Mammary epithelial cell (primary cell): ENCODE measurements at regions of chr11 and their contacts with region 1.

Region 1: GRCh38 chr11:9460322-9461067 is at the start of gene ZNF143:
- DNase-seq: peak; percentile 100
- H3K4me3 ChIP-seq: peak within 1 kb of the TSS; percentile 65 to 88 (median 82)
- H3K27ac ChIP-seq: peak within 1 kb of the TSS; percentile 98
- H3K4me1 ChIP-seq: peaks cover 19% of the 10 kb centered on the region
- H3K27me3 ChIP-seq: no peaks in the 10 kb centered on the region
- CTCF ChIP-seq: no peak
- total RNA-seq, gene ZNF143: 19.5 to 22.7 TPM

Region 2: DNA sequence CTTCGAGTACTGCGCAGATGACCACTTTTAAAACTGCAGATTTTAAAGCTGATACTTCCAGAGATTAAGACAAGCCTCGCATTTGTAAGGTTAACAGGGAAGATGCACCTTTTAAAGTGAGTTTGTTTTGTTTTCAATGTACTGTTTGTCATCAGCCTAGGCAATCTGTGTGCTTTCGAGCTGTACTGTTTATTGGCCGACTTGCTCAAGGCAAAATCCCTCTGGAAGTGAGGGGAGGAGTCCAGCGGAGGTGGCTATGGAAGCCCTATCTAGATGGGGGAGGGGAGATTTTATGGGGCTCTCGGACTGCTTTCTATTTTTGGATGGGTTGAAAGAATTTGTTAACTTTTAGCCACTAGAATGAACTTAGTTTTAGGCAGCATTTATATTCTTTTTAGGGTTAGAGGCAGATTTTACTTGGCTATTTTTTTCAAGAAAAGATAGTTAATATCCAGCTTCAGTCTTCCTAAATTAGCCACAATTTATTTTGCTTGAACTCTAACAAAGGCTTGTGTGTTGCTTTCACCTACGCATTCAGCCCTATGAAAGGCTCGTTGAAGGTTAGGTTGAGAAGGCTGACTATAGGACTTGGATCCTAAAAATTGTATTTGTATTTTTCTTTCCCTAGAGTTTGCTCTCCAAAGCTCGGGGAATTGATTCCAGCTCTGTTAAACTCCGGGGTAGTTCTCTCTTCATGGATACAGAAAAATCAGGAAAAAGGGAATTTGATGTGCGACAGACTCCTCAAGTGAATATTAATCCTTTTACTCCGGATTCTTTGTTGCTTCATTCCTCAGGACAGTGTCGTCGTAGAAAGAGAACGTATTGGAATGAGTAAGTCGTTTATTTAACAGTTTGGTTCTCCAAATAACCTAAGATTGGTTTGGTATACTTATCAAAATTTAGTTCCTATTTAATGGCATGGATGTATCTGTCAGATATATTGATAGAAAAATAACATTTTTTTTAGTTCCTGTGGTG is 115.1 kb after region 1 on chr11:
- CTCF ChIA-PET with region 1: no interaction called
- dilution Hi-C with region 1: no loop called
- in situ Hi-C with region 1: no loop called
- intact Hi-C with region 1: loop called (anchors 2 kb)
- DNase-seq: peak; percentile 86
- H3K4me3 ChIP-seq: peak overlapping the region; percentile 87 to 97 (median 89)
- H3K27ac ChIP-seq: peak overlapping the region; percentile 96
- H3K4me1 ChIP-seq: peaks cover 17% of the 10 kb centered on the region
- H3K27me3 ChIP-seq: no peaks in the 10 kb centered on the region
- CTCF ChIP-seq: no peak

Region 3: GRCh38 chr11:9726321-9727022 is 266.0 kb after region 1 on chr11:
- CTCF ChIA-PET with region 1: no interaction called
- dilution Hi-C with region 1: no loop called
- in situ Hi-C with region 1: no loop called
- intact Hi-C with region 1: loop called (anchors 5 kb)
- DNase-seq: peak; percentile 75
- H3K4me3 ChIP-seq: no peak overlapping the region
- H3K27ac ChIP-seq: no peak overlapping the region
- H3K4me1 ChIP-seq: peaks cover 4% of the 10 kb centered on the region
- H3K27me3 ChIP-seq: no peaks in the 10 kb centered on the region
- CTCF ChIP-seq: no peak

Region 4: GRCh38 chr11:9906043-9906791 is 445.7 kb after region 1 on chr11:
- CTCF ChIA-PET with region 1: no interaction called
- dilution Hi-C with region 1: no loop called
- in situ Hi-C with region 1: no loop called
- intact Hi-C with region 1: loop called (anchors 5 kb)
- DNase-seq: peak; percentile 81
- H3K4me3 ChIP-seq: no peak overlapping the region
- H3K27ac ChIP-seq: peak overlapping the region; percentile 73
- H3K4me1 ChIP-seq: peaks cover 31% of the 10 kb centered on the region
- H3K27me3 ChIP-seq: no peaks in the 10 kb centered on the region
- CTCF ChIP-seq: no peak